A673 (cell line): ENCODE measurements at regions of chr5 and their contacts with region 1.

Region 1: DNA sequence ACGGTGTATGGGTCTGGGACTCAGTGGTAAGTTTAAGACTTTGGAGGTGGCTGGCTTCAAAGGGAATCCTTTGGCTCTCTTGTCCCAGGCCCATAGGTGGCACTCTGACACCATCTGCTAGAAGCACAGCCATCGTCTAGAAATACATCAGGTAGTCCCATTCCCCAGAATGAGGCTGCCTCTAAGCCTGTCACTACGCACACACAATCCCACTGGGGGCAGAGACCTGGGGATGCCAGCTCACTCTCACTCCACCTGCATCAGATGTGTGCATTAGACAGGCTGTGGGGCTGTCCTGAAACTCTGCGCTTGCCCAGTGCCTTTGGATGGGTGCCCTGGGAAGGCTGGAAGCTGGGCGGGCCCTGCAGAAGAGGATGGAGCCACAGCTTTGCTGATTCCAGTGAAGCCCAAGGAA is 127.5 kb upstream of the PANK3 start:
- DNase-seq: peak; percentile 51
- H3K4me3 ChIP-seq: no peak overlapping the region
- H3K27ac ChIP-seq: no peak overlapping the region
- H3K4me1 ChIP-seq: no peaks in the 10 kb centered on the region
- H3K27me3 ChIP-seq: no peaks in the 10 kb centered on the region
- CTCF ChIP-seq: peak; percentile 57

Region 2: DNA sequence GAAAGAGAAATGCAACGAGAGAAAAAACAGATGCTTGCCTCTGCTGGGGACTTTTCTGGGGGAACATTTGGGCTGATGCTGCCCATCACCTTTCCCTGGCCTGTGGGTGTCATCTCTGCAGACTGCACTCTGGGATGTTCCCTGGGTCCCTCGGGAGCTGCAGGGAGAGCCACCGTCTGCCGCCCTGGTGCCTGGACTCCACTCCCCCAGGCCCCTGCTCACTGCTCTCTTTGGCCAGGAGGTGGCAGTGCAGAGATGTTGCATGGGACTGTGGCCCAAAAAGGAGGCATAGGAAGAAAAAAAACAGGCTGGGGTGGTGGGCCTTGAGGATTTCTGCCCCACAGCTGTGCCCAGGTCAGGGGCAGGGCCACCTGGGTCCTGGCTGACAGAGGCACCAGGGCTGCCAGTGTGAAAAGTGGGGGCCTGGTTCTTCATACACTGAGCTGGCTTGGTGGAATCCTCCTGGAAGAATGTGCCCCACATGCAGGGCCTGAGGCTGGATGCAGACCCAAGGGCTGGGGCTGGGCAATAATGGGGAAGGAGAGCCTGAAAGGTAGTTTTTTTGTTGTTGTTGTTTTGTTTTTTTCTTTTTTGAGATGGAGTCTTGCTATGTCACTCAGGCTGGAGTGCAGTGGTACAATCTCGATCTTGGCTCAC is 240.7 kb after region 1 on chr5:
- CTCF ChIA-PET with region 1: no interaction called
- POLR2A ChIA-PET with region 1: no interaction called
- intact Hi-C with region 1: loop called (anchors 5 kb)
- DNase-seq: peak; percentile 53
- H3K4me3 ChIP-seq: no peak overlapping the region
- H3K27ac ChIP-seq: no peak overlapping the region
- H3K4me1 ChIP-seq: no peaks in the 10 kb centered on the region
- H3K27me3 ChIP-seq: peaks cover 12% of the 10 kb centered on the region
- CTCF ChIP-seq: peak; percentile 73

Region 3: GRCh38 chr5:169577951-169578350 is 871.3 kb after region 1 on chr5:
- CTCF ChIA-PET with region 1: no interaction called
- POLR2A ChIA-PET with region 1: no interaction called
- intact Hi-C with region 1: loop called (anchors 10 kb)
- DNase-seq: no peak
- H3K4me3 ChIP-seq: no peak overlapping the region
- H3K27ac ChIP-seq: no peak overlapping the region
- H3K4me1 ChIP-seq: peaks cover 4% of the 10 kb centered on the region
- H3K27me3 ChIP-seq: peaks cover 61% of the 10 kb centered on the region
- CTCF ChIP-seq: 0 out of 2 replicates have a peak, but pooled peaks have one; percentile 19